ENCODE measurements at regions of chr9 and their contacts with region 1.

Region 1: GRCh38 chr9:122350638-122351355 is 20.0 kb upstream of the PTGS1 start:
- DNase-seq: peak; percentile 44
- H3K4me3 ChIP-seq: no peak overlapping the region
- H3K27ac ChIP-seq: no peak overlapping the region
- H3K27me3 ChIP-seq: peaks cover 3% of the 10 kb centered on the region
- CTCF ChIP-seq: peak; percentile 98

Region 2: DNA sequence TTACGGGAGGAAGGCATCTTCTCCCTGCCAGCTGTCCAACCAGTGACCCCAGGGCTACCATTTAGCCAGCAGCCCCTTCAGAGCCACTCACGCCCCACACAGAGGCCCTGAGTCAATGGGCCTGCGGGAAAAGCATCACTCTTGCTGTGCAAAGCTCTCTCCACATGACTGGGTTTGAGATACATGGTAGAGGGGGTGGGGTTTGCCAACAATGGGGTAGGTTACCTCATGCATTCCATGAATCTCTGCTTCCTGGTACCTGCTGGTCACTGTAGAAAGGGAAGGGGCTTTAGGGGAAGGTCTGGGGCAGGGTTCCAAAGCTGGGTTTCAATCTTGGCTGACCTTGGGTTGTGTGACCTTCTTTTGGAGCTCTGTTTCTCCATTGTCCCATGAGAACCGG is 234.8 kb before region 1 on chr9:
- CTCF ChIA-PET with region 1: interaction called, 222 read pairs
- POLR2A ChIA-PET with region 1: no interaction called
- DNase-seq: no peak
- H3K4me3 ChIP-seq: no peak overlapping the region
- H3K27ac ChIP-seq: no peak overlapping the region
- H3K27me3 ChIP-seq: peaks cover 25% of the 10 kb centered on the region
- CTCF ChIP-seq: no peak

Region 3: DNA sequence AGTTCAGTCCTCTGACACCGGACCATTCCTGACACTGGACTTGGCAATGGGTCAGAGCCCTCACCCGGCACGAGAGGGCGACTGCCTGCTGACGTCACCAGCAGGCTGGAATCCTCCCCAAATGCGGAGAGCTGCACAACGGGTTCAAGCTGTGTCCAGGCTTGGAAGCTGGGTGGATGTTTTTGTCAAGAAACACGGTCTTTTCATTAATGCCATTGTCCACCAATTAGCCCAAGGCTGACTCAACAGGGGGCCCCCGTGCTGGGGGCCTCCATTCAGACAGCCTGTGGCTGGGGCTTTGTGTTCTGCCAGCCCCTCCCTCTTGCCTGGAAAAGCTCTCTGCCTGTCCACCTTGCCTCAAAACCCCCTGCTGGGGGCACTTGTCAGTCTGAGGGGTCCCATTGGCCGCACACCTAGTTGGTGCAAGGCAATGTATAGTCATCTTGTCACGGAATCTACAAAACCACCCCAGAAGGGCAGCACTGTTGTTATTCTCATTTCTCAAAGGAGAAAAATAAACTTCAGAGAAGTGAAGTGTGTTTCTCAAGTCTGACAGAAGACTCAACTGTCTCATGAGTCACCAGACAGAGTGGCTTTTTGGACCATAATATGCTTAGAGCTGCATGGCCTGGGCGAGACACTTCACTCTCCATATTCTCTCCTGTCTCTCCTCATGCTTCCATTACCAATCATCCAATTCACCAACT is 215.8 kb before region 1 on chr9:
- CTCF ChIA-PET with region 1: interaction called, 10 read pairs
- POLR2A ChIA-PET with region 1: no interaction called
- DNase-seq: no peak
- H3K4me3 ChIP-seq: no peak overlapping the region
- H3K27ac ChIP-seq: no peak overlapping the region
- H3K27me3 ChIP-seq: peaks cover 7% of the 10 kb centered on the region
- CTCF ChIP-seq: no peak

Region 4: GRCh38 chr9:122264360-122265148 is 86.2 kb before region 1 on chr9 and contains the starts of genes MRRF and RBM18:
- CTCF ChIA-PET with region 1: interaction called, 11 read pairs
- POLR2A ChIA-PET with region 1: interaction called, 4 read pairs
- DNase-seq: peak; percentile 65
- H3K4me3 ChIP-seq: peak within 1 kb of the TSS; percentile 97
- H3K27ac ChIP-seq: peak within 1 kb of the TSS; percentile 86
- H3K27me3 ChIP-seq: no peaks in the 10 kb centered on the region
- CTCF ChIP-seq: no peak
- polyA plus RNA-seq, gene MRRF: 42.9 and 50.1 TPM in 2 replicates
- polyA plus RNA-seq, gene RBM18: 27.5 and 38.6 TPM in 2 replicates

Region 5: DNA sequence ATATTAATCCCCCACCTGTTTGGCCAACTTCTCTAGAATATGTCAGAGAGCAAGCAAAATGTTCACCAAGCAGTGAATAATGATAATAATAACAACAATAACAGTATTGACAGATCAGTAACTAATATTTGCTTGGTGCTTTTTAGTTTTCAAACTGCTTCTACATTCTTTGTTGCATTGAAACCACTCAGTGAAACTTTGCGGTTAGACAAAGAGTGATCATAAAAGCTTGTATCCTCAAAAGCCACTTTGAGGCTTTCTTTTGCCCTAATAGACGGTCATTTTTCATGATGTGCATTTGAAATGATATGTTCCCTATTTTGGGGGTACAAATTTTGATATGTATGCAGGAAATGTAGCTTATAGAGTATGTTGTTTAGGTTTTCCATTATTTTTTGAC is 23.6 kb before region 1 on chr9:
- CTCF ChIA-PET with region 1: no interaction called
- POLR2A ChIA-PET with region 1: no interaction called
- DNase-seq: no peak
- H3K4me3 ChIP-seq: no peak overlapping the region
- H3K27ac ChIP-seq: no peak overlapping the region
- H3K27me3 ChIP-seq: no peaks in the 10 kb centered on the region
- CTCF ChIP-seq: no peak

Region 6: DNA sequence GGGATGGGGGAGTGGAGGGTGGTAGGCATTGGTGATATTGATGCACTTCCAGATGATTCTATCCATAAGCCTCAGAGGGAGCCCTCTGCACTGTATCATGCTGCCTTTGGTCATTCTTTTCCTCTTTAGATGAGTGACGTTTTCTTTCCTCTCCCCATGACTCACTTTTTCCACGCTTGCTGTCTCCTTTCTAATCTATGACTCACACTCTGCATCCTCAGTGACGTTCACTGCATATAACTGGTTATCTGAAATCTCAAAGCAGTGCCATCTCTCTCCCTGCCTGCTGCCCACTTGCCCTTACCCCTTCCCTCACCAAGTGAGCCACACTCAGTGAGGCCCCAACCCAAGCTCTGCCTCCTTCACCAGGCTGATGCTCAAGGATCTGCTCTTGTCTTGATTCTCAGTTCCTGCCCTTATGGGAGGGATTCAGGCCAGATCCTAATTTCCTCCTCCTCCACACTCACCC is 51.6 kb after region 1 on chr9:
- CTCF ChIA-PET with region 1: no interaction called
- POLR2A ChIA-PET with region 1: no interaction called
- DNase-seq: peak; percentile 91
- H3K4me3 ChIP-seq: no peak overlapping the region
- H3K27ac ChIP-seq: peak overlapping the region; percentile 86
- H3K27me3 ChIP-seq: no peaks in the 10 kb centered on the region
- CTCF ChIP-seq: no peak

Measured in AG04450 (cell line).